ENCODE measurements at regions of chr15 and their contacts with region 1.

Region 1: DNA sequence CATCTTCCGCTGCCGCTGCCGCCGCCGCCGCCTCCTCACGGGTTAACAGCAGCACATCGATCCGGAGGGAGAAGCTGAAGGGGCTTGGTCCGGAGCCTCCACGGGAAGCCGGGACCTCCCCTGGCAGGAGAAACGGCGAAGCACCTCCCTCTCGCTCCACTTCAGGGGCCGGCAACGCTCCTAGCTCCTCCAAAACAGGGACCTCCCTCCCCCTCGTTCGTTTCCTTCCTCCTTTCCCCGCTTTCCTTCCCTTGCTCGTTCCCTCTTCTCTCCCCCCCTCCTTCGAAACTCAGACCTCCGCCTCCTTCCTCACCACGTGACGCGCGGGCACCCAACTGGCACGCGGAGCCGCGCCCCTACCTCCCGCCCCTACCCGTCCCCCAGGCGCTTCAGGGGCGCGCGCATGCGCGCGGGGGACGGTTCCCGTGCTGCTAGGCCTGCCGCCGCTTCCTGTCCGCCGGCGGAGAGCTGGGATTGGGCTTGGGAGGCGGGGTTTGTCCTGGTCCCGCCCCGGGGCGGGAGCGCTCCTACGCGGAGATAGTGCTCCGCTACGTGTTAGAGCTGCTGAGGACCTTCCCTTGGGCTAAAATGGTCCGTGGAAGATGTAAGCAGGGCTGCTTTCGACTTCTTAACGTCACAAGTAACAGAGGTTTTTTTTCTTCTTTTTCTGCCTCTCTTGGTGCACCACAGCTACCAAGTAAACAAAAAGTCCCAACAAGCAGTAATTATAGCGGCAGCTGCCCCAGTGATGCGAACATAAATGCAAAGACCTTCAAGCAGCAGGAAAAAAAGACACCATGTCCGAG is at the start of gene ADAM10:
- DNase-seq: peak; percentile 99 to 100 (median 100)
- ATAC-seq: peak; percentile 95 to 98 (median 98)
- H3K4me3 ChIP-seq: peak within 1 kb of the TSS; percentile 75 to 95 (median 91)
- H3K27ac ChIP-seq: peak within 1 kb of the TSS; percentile 94 to 98 (median 98)
- H3K4me1 ChIP-seq: peaks cover 0 to 38% (median 25%) of the 10 kb centered on the region in 12 donors
- H3K27me3 ChIP-seq: no peaks in the 10 kb centered on the region
- CTCF ChIP-seq: peak in 1 of 12 donors; percentile 5
- POLR2A ChIP-seq: peak; percentile 46 to 90
- total RNA-seq, gene ADAM10: 32.9 to 128 (median 74.8) TPM

Region 2: GRCh38 chr15:58203537-58203936 is 546.2 kb before region 1 on chr15:
- intact Hi-C with region 1: no loop called
- DNase-seq: no peak
- ATAC-seq: peak in 1 of 4 donors; percentile 64
- H3K4me3 ChIP-seq: no peak overlapping the region
- H3K27ac ChIP-seq: no peak overlapping the region
- H3K4me1 ChIP-seq: peaks cover 0 to 10% (median 0%) of the 10 kb centered on the region in 12 donors
- H3K27me3 ChIP-seq: no peaks in the 10 kb centered on the region
- CTCF ChIP-seq: no peak
- POLR2A ChIP-seq: no peak

Region 3: DNA sequence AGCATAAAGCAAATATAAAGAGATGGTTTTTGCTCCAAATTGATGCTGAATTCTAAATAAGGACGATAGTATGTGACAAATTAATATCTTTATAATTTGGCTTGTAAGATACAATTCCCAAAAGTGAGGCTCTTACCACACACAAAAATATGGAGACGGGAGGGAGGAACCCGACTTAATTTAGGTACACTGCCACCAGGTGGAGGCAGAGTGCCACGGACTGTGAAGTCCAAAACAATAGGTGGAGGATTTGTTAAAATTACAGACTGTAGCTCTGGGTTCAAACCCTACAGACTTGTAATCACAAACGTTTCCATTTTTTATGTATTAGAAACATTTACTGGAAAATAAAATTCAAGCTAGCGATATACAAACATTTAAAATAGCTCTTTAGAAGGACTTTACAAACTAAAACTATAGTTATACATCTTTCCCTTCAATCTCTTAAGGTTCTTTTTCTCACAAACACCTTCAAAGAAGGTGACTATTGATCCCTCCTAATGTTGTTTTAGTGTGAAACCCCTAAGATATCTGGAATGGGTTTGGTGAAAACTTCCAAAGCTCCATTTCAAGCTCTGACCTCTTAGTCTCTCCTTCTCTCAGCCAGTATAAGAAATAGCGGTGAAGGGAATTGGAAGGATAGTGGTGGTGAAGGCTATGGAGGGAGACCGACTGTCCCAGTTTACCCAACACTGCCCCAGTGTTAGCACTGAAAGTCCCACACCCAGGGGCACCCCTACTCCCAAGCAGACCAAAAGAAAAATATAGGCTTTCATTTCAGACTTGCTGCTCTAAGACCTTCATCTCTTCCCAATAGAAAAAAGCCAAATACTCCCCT is 521.8 kb before region 1 on chr15:
- intact Hi-C with region 1: loop called in 2 of 10 experiments (anchors 5 kb)
- DNase-seq: peak; percentile 68 to 86 (median 71)
- ATAC-seq: peak; percentile 39 to 79 (median 66)
- H3K4me3 ChIP-seq: no peak overlapping the region
- H3K27ac ChIP-seq: peak overlapping the region in 11 of 12 donors; percentile 25 to 79 (median 67)
- H3K4me1 ChIP-seq: peaks cover 3 to 43% (median 27%) of the 10 kb centered on the region in 12 donors
- H3K27me3 ChIP-seq: no peaks in the 10 kb centered on the region
- CTCF ChIP-seq: peak; percentile 71 to 91 (median 84)
- POLR2A ChIP-seq: no peak

Region 4: GRCh38 chr15:58331903-58332675 is 417.6 kb before region 1 on chr15:
- intact Hi-C with region 1: loop called in 2 of 10 experiments (anchors 2 to 5 kb)
- DNase-seq: peak; percentile 94 to 98 (median 96)
- ATAC-seq: peak; percentile 96 to 98 (median 97)
- H3K4me3 ChIP-seq: peak overlapping the region in 2 of 12 donors; percentile 1 to 14
- H3K27ac ChIP-seq: peak overlapping the region; percentile 79 to 95 (median 90)
- H3K4me1 ChIP-seq: peaks cover 8 to 48% (median 31%) of the 10 kb centered on the region in 12 donors
- H3K27me3 ChIP-seq: no peaks in the 10 kb centered on the region
- CTCF ChIP-seq: no peak
- POLR2A ChIP-seq: peak in 1 of 2 donors; percentile 13

Region 5: GRCh38 chr15:58457381-58457965 is 292.3 kb before region 1 on chr15:
- intact Hi-C with region 1: loop called in 1 of 10 experiments (anchors 5 kb)
- DNase-seq: no peak
- ATAC-seq: no peak
- H3K4me3 ChIP-seq: no peak overlapping the region
- H3K27ac ChIP-seq: peak overlapping the region in 11 of 12 donors; percentile 12 to 84 (median 52)
- H3K4me1 ChIP-seq: peaks cover 10 to 48% (median 36%) of the 10 kb centered on the region in 12 donors
- H3K27me3 ChIP-seq: no peaks in the 10 kb centered on the region
- CTCF ChIP-seq: no peak
- POLR2A ChIP-seq: no peak

Region 6: DNA sequence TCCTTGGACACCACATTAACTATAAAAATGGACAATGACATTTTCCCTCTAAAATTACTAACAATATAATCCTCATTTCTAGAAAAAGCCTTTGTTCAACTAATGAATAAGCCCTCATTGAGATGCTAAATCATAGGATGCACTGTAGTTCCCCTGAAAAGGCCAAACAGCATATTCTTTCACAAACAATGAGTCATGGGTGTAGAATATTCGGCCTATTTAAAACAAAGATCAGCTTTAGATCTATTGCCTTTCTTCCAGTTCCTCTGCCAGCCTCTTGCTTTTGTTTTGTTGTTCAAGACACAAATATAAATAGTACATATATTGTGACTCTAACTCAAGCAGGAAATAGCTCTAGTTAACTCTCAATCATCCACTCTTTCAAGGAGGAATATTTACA is 82.8 kb before region 1 on chr15:
- intact Hi-C with region 1: loop called in 1 of 10 experiments (anchors 5 kb)
- DNase-seq: no peak
- ATAC-seq: peak in 1 of 4 donors; percentile 20
- H3K4me3 ChIP-seq: no peak overlapping the region
- H3K27ac ChIP-seq: peak overlapping the region in 1 of 12 donors; percentile 3
- H3K4me1 ChIP-seq: peaks cover 0 to 27% (median 2%) of the 10 kb centered on the region in 12 donors
- H3K27me3 ChIP-seq: no peaks in the 10 kb centered on the region
- CTCF ChIP-seq: no peak
- POLR2A ChIP-seq: no peak

Region 7: GRCh38 chr15:58690703-58691102 is 59.0 kb before region 1 on chr15:
- intact Hi-C with region 1: loop called in 4 of 10 experiments (anchors 5 to 10 kb)
- DNase-seq: no peak
- ATAC-seq: peak in 2 of 4 donors; percentile 22 to 38
- H3K4me3 ChIP-seq: no peak overlapping the region
- H3K27ac ChIP-seq: no peak overlapping the region
- H3K4me1 ChIP-seq: peaks cover 0 to 34% (median 17%) of the 10 kb centered on the region in 12 donors
- H3K27me3 ChIP-seq: no peaks in the 10 kb centered on the region
- CTCF ChIP-seq: no peak
- POLR2A ChIP-seq: no peak

Region 8: DNA sequence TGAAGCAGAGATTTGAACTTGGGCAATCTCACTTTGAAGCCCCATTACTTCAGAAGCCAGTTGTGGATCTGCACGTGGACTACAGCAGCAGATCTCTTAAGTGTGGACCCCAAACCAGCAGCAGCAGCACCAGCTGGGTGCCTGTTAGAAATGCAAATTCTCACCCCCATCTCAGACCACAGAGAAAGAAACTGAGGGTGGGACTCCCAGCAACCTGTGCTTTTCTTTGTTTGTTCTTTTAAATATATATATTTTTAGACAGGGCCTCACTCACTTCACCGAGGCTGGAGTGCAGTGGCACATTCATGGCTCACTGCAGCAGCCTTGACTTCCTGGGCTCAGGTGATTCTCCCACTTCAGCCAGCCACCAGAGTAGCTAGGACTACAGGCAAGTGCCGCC is 130.6 kb after region 1 on chr15:
- intact Hi-C with region 1: no loop called
- DNase-seq: no peak
- ATAC-seq: no peak
- H3K4me3 ChIP-seq: no peak overlapping the region
- H3K27ac ChIP-seq: no peak overlapping the region
- H3K4me1 ChIP-seq: no peaks in the 10 kb centered on the region
- H3K27me3 ChIP-seq: no peaks in the 10 kb centered on the region
- CTCF ChIP-seq: no peak
- POLR2A ChIP-seq: no peak

Measured in heart left ventricle (tissue), 16 donors.